WTC11 (cell line): ENCODE measurements at regions of chr19 and their contacts with region 1.

Region 1: DNA sequence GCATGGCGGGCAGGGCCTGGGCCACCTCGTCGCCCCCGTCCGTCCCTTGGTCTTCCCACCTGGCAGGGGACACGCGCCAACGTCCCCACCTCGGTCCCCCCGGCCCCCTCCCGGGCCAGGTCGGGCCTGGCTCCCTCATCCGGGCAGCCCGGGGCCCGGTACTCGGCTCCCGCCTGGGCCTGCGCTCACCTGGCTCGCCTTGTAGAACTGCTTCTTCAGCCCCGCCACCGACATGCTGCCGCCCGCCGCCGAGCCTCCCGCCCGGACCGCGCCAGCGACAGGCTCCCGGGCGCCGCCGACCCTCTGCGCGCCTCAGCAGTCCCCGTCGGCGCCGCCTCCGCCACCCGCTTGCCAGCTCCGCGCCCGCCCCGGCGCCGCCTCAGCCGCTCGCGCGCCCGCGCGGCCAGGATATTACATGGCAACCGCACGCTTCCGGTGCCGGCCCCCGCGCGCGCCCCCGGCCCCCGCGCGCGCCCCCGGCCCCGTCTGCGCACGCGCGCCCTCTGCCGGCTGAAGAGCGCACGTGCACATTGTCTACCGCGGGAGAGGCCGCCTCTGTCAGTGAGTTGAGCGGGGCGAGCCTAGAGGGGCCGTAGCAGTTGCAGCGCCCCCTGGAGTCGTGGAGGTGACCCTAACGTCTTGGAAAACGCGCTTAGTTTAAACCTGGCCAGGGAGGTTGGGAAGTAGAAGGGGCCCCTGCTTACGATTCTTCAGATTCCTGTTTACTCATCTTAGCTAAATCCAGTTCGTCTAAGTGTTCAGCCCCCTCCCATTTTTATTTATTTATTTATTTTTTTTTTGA is at the start of gene SH3GL1:
- DNase-seq: peak; percentile 89
- ATAC-seq: peak; percentile 74
- H3K4me3 Mint-ChIP-seq: peak within 1 kb of the TSS; percentile 96
- H3K27ac Mint-ChIP-seq: peak within 1 kb of the TSS; percentile 97
- H3K4me1 Mint-ChIP-seq: peaks cover 38% of the 10 kb centered on the region
- H3K27me3 Mint-ChIP-seq: no peaks in the 10 kb centered on the region
- CTCF ChIP-seq: peak; percentile 92
- total RNA-seq, gene SH3GL1: 89.4 to 109 TPM (median 89.7 TPM) in 3 replicates

Region 2: GRCh38 chr19:4375164-4376027 is 24.9 kb before region 1 on chr19:
- CTCF ChIA-PET with region 1: interaction called, 28 read pairs
- POLR2A ChIA-PET with region 1: interaction called, 4 read pairs
- DNase-seq: peak; percentile 84
- ATAC-seq: peak; percentile 79
- H3K4me3 Mint-ChIP-seq: no peak overlapping the region
- H3K27ac Mint-ChIP-seq: peak overlapping the region; percentile 88
- H3K4me1 Mint-ChIP-seq: peaks cover 47% of the 10 kb centered on the region
- H3K27me3 Mint-ChIP-seq: no peaks in the 10 kb centered on the region
- CTCF ChIP-seq: no peak

Region 3: DNA sequence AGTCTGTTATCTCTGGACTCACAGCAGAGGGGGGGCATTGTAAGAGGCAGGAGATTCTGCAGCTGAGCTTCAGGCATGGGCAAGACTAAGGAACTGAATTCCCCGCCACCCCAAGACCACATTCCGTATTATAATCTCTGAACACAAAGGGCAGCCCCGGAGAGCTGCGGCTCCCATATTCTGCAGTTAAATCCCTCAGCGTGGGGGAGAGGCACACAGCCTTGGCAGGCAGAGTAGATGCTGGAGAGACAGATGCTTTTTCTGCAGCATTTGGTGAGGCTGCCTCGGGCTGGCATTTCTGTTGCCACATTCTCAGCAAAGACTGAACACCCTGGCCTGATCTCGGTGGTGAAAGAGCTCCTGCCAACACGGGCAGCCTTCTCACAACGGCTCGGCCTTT is 15.0 kb after region 1 on chr19:
- CTCF ChIA-PET with region 1: interaction called, 11 read pairs
- POLR2A ChIA-PET with region 1: interaction called, 3 read pairs
- DNase-seq: no peak
- ATAC-seq: peak; percentile 47
- H3K4me3 Mint-ChIP-seq: peak overlapping the region; percentile 20
- H3K27ac Mint-ChIP-seq: peak overlapping the region; percentile 90
- H3K4me1 Mint-ChIP-seq: peaks cover 45% of the 10 kb centered on the region
- H3K27me3 Mint-ChIP-seq: no peaks in the 10 kb centered on the region
- CTCF ChIP-seq: no peak

Region 4: GRCh38 chr19:4505897-4506744 is 105.8 kb after region 1 on chr19:
- CTCF ChIA-PET with region 1: no interaction called
- POLR2A ChIA-PET with region 1: no interaction called
- DNase-seq: no peak
- ATAC-seq: no peak
- H3K4me3 Mint-ChIP-seq: no peak overlapping the region
- H3K27ac Mint-ChIP-seq: no peak overlapping the region
- H3K4me1 Mint-ChIP-seq: no peaks in the 10 kb centered on the region
- H3K27me3 Mint-ChIP-seq: peaks cover 41% of the 10 kb centered on the region
- CTCF ChIP-seq: no peak

Region 5: DNA sequence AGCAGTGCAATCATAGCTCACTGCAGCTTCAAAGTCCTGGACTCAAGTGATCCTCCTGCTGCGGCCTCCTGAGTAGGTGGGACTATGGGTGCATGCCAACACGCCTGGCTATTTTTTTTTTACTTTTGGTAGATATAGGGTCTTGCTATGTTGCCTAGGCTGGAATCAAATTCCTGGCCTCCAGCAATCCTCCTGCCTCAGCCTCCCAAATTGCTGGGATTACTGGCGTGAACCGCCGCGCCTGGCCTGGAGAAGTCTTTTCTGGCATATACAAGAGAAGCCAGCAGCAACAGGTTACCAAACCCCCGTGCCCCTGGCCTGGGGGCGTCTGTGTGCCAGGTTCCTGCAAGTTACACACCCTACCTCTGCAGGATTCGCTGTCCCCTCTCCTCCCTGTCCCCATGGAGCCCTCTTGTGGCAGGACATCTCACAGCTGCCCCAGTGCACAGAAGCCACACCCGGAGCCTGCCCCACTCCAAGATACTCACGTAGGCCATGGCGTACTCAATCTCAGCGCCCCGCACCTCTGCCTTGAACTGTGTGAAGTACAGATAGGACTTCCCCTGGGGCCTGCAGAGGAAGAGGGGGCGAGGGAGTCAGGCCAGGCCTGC is 259.9 kb after region 1 on chr19:
- CTCF ChIA-PET with region 1: no interaction called
- POLR2A ChIA-PET with region 1: no interaction called
- DNase-seq: peak; percentile 72
- ATAC-seq: peak; percentile 95
- H3K4me3 Mint-ChIP-seq: no peak overlapping the region
- H3K27ac Mint-ChIP-seq: no peak overlapping the region
- H3K4me1 Mint-ChIP-seq: no peaks in the 10 kb centered on the region
- H3K27me3 Mint-ChIP-seq: no peaks in the 10 kb centered on the region
- CTCF ChIP-seq: no peak